Activated CD4-positive, alpha-beta T cell treated with anti-CD3 and anti-CD28 coated beads for 36 hours (primary cell): ENCODE measurements at regions of chr3 and their contacts with region 1.

Region 1: GRCh38 chr3:46866720-46867549 is 3.7 kb upstream of the MYL3 start:
- DNase-seq: peak; percentile 90
- ATAC-seq: peak; percentile 79
- H3K4me3 Mint-ChIP-seq: no peak overlapping the region
- H3K27ac Mint-ChIP-seq: no peak overlapping the region
- H3K4me1 Mint-ChIP-seq: no peaks in the 10 kb centered on the region
- H3K27me3 Mint-ChIP-seq: no peaks in the 10 kb centered on the region

Region 2: GRCh38 chr3:46261926-46262594 is 604.9 kb before region 1 on chr3:
- CTCF ChIA-PET with region 1: no interaction called
- POLR2A ChIA-PET with region 1: no interaction called
- intact Hi-C with region 1: no loop called
- DNase-seq: no peak
- ATAC-seq: peak; percentile 51
- H3K4me3 Mint-ChIP-seq: no peak overlapping the region
- H3K27ac Mint-ChIP-seq: no peak overlapping the region
- H3K4me1 Mint-ChIP-seq: peaks cover 15% of the 10 kb centered on the region
- H3K27me3 Mint-ChIP-seq: peaks cover 15% of the 10 kb centered on the region

Region 3: DNA sequence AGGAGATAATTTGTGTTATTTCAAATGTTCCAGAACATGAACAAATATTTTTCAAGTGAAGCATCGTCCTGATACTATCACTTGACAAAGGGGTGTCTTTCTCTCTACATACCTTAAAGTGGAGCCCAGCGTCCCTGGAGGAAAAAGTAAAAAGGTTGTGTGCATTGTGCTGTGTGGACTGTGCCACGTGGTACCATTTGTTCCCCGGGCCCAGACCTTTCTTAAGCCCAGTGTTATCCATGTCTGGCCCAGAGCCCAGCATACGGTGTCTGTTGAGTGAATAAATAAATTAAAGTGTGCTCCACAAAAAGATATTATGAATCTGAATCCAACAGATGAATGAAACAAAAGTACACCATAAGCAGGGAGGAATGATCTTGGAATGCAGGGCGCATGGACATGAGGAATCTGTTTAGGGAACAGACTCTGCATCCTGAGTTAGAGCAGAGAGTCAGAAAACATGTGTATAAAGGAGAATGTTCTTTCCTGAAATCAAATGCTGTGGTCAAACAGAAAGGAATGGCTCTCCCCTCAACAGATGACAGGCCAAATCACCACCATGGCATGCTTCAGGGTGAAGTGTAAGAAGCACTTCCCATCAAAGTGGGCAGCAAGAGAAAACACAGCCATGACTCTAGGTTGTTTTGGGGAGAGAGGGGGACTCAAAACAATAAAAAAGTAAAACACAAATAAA is 141.2 kb before region 1 on chr3:
- CTCF ChIA-PET with region 1: no interaction called
- POLR2A ChIA-PET with region 1: no interaction called
- intact Hi-C with region 1: no loop called
- DNase-seq: no peak
- ATAC-seq: no peak
- H3K4me3 Mint-ChIP-seq: no peak overlapping the region
- H3K27ac Mint-ChIP-seq: no peak overlapping the region
- H3K4me1 Mint-ChIP-seq: no peaks in the 10 kb centered on the region
- H3K27me3 Mint-ChIP-seq: peaks cover 8% of the 10 kb centered on the region

Region 4: GRCh38 chr3:46856576-46857485 is 10.1 kb before region 1 on chr3:
- CTCF ChIA-PET with region 1: no interaction called
- POLR2A ChIA-PET with region 1: no interaction called
- intact Hi-C with region 1: no loop called
- DNase-seq: peak; percentile 2
- ATAC-seq: no peak
- H3K4me3 Mint-ChIP-seq: no peak overlapping the region
- H3K27ac Mint-ChIP-seq: no peak overlapping the region
- H3K4me1 Mint-ChIP-seq: no peaks in the 10 kb centered on the region
- H3K27me3 Mint-ChIP-seq: peaks cover 3% of the 10 kb centered on the region

Region 5: GRCh38 chr3:46878789-46879436 is 12.0 kb after region 1 on chr3:
- CTCF ChIA-PET with region 1: interaction called, 10 read pairs
- POLR2A ChIA-PET with region 1: no interaction called
- intact Hi-C with region 1: no loop called
- DNase-seq: no peak
- ATAC-seq: no peak
- H3K4me3 Mint-ChIP-seq: no peak overlapping the region
- H3K27ac Mint-ChIP-seq: no peak overlapping the region
- H3K4me1 Mint-ChIP-seq: peaks cover 6% of the 10 kb centered on the region
- H3K27me3 Mint-ChIP-seq: peaks cover 21% of the 10 kb centered on the region

Region 6: GRCh38 chr3:46895204-46895660 is 28.3 kb after region 1 on chr3:
- CTCF ChIA-PET with region 1: interaction called, 12 read pairs
- POLR2A ChIA-PET with region 1: no interaction called
- intact Hi-C with region 1: loop called (anchors 1 kb)
- DNase-seq: peak; percentile 86
- ATAC-seq: peak; percentile 74
- H3K4me3 Mint-ChIP-seq: no peak overlapping the region
- H3K27ac Mint-ChIP-seq: no peak overlapping the region
- H3K4me1 Mint-ChIP-seq: peaks cover 4% of the 10 kb centered on the region
- H3K27me3 Mint-ChIP-seq: peaks cover 35% of the 10 kb centered on the region

Region 7: DNA sequence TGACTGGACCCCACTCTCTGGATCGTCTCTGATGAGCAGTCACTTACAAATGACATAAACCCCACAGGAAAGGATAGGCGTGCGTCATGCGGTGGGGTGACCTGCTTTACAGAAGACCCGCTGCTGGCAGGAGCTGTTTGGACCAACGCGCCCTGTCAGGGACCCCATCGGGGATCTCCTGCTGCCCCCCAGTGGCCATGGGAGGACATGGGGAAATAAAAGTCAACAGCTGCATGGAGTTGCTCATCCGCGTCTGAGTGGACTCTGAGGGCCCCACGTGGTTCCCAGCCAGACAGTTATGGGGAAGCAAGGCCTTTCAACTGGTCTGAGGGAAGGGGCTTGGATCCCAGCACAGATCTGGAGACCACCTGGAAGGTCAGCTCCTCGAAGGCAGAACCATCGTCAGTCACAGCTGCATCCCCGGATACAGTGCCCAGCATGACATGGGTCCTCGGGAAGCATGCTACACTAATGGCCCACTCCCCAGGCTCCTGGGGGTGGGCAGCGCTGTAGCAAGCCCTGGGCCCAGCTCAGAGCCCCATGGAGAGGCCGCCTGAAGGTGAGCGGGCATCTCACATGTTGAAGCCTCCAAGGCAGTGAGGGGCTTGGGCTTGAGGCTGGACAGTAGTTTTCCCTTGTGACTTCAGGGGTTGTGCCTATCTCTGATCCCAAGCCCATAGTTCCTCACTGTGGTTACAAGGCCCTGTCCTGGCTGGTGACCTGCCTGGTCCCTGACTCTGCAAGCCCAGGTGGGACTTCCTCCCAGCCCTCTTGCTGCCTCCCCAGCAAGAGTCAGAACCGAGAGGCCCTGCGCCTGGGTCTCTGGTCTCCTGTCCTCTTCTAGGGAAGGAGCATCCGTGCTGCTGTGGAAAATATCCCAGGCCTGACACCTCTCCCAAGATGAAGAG is 42.9 kb after region 1 on chr3:
- CTCF ChIA-PET with region 1: interaction called, 15 read pairs
- POLR2A ChIA-PET with region 1: no interaction called
- intact Hi-C with region 1: loop called (anchors 1 kb)
- DNase-seq: peak; percentile 91
- ATAC-seq: peak; percentile 96
- H3K4me3 Mint-ChIP-seq: no peak overlapping the region
- H3K27ac Mint-ChIP-seq: no peak overlapping the region
- H3K4me1 Mint-ChIP-seq: peaks cover 18% of the 10 kb centered on the region
- H3K27me3 Mint-ChIP-seq: no peaks in the 10 kb centered on the region

Region 8: DNA sequence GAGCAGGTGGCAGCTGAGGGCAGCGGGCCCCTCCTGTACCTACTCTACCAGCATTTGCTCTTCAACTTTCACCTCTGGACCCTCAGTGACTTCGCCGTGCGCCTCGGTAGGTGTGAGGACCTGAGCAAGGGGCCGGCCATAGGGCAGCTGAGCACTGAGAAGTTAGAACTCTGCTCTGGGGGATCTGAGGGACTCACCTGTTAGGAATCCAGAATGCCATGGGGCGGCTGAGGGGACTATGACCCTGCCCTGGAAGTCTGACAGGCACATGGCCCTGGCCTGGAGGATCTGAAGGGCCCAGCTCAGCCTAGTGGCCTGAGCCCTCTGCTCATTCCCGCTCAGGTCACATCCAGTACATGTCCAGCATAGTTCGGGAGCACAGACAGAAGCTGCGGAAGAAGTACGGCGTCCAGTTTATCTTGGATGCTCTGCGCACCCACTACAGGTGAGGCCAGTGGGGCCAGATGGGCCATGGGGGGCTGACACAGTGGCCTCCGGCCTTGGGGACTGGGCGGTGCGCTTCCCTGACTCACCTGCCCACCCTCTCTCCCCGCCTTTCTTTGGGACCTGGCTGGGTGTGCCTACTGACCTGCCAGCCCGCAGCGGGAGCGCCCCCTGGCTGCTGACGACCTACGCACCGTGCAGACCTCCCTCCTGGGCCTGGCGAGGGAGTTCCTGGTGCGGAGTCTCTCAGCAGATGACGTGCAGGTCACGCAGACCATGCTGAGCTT is 131.4 kb after region 1 on chr3:
- CTCF ChIA-PET with region 1: no interaction called
- POLR2A ChIA-PET with region 1: no interaction called
- intact Hi-C with region 1: loop called (anchors 1 kb)
- DNase-seq: peak; percentile 88
- ATAC-seq: peak; percentile 84
- H3K4me3 Mint-ChIP-seq: no peak overlapping the region
- H3K27ac Mint-ChIP-seq: no peak overlapping the region
- H3K4me1 Mint-ChIP-seq: peaks cover 9% of the 10 kb centered on the region
- H3K27me3 Mint-ChIP-seq: no peaks in the 10 kb centered on the region

Region 9: GRCh38 chr3:47324278-47324865 is 457.4 kb after region 1 on chr3:
- CTCF ChIA-PET with region 1: no interaction called
- POLR2A ChIA-PET with region 1: no interaction called
- intact Hi-C with region 1: loop called in 1 of 2 experiments (anchors 1 kb)
- DNase-seq: peak; percentile 66
- ATAC-seq: peak; percentile 88
- H3K4me3 Mint-ChIP-seq: no peak overlapping the region
- H3K27ac Mint-ChIP-seq: no peak overlapping the region
- H3K4me1 Mint-ChIP-seq: no peaks in the 10 kb centered on the region
- H3K27me3 Mint-ChIP-seq: no peaks in the 10 kb centered on the region

Region 10: GRCh38 chr3:47370887-47371697 is 504.2 kb after region 1 on chr3:
- CTCF ChIA-PET with region 1: no interaction called
- POLR2A ChIA-PET with region 1: no interaction called
- intact Hi-C with region 1: loop called (anchors 5 to 10 kb)
- DNase-seq: peak; percentile 69
- ATAC-seq: peak; percentile 55
- H3K4me3 Mint-ChIP-seq: no peak overlapping the region
- H3K27ac Mint-ChIP-seq: no peak overlapping the region
- H3K4me1 Mint-ChIP-seq: no peaks in the 10 kb centered on the region
- H3K27me3 Mint-ChIP-seq: peaks cover 2% of the 10 kb centered on the region